ENCODE measurements at regions of chr20 and their contacts with region 1.

Region 1: GRCh38 chr20:47620808-47621805 is 119.4 kb downstream of the NCOA3 start:
- DNase-seq: no peak
- ATAC-seq: no peak
- H3K4me3 ChIP-seq: no peak overlapping the region
- H3K27ac ChIP-seq: no peak overlapping the region
- H3K4me1 ChIP-seq: no peaks in the 10 kb centered on the region
- H3K27me3 ChIP-seq: no peaks in the 10 kb centered on the region

Region 2: GRCh38 chr20:46757754-46758678 is 863.1 kb before region 1 on chr20:
- intact Hi-C with region 1: loop called in 1 of 4 experiments (anchors 10 kb)
- DNase-seq: peak; percentile 42 to 77 (median 73)
- ATAC-seq: peak in 1 of 2 donors; percentile 63
- H3K4me3 ChIP-seq: no peak overlapping the region
- H3K27ac ChIP-seq: no peak overlapping the region
- H3K4me1 ChIP-seq: no peaks in the 10 kb centered on the region
- H3K27me3 ChIP-seq: no peaks in the 10 kb centered on the region

Region 3: DNA sequence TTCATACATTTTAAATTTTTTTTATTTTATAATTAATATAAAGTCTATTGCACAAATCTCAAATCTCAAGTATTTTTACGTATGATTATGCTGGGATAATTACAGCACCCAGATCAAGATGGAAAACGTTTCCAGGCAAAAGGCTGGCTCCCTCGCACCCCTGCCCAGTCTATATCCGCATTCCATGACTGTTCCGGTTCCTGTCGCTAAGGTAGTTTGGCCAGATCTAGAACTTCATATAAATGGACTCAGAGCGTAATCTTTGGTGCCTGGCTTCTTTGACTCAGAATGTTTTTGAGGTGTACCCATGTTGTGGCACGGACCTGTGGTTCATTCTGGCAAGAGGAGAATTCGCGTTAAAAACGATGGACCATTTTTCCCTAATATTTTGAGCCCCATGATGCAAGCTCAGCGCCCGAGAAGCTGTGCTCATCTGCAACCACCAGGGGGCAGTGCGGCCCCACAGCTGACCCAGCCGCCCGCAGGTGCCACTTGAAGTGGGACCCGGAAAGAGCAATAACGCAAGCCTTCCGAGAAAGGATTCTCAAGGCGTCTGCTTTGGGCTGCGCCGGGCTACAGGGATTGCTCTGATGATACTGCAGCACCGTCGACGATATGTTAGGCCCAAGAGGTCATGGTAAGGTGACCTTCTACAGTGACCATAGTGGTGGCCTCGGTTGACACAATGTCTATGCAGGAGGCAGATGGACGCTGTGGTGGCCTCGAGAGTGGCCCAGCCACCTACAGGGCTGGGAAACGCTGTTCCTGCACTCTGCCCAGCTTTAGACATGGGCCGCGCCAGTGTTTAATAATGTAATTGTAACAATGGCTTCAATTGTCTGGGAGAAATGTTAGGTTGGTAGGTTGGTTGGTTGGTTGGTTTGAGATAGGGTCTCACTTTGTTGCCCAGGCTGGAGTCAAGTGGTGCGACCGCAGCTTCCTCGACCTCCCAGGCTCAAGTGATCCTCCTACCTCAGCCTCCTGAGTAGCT is 424.7 kb before region 1 on chr20:
- intact Hi-C with region 1: loop called in 3 of 4 experiments (anchors 5 to 10 kb)
- DNase-seq: peak; percentile 72 to 88 (median 86)
- ATAC-seq: peak; percentile 71 to 76
- H3K4me3 ChIP-seq: no peak overlapping the region
- H3K27ac ChIP-seq: no peak overlapping the region
- H3K4me1 ChIP-seq: peaks cover 3% of the 10 kb centered on the region
- H3K27me3 ChIP-seq: no peaks in the 10 kb centered on the region

Region 4: DNA sequence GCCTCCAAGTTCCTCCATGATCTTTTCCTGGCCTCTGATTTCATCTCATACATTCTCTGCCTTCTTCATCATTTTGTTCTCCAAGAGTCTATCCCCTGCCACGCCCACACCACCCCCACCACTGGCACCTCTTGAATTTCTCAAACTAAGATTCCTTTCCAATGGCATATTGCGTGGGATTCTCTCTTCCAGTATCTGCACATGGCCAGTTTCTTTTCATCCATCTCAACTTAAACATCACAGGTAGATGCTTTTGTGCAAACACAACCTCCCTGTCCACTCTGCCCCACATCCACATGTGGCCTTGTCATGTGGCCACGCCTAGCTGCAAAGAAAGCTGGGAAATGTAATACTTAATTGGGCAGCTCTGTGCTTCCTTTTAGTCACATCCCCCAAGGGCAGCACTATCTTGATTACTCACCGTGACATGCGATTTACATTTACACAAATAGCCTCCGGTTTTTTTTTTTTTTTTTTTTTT is 231.2 kb before region 1 on chr20:
- intact Hi-C with region 1: loop called in 3 of 4 experiments (anchors 10 kb)
- DNase-seq: no peak
- ATAC-seq: no peak
- H3K4me3 ChIP-seq: no peak overlapping the region
- H3K27ac ChIP-seq: no peak overlapping the region
- H3K4me1 ChIP-seq: no peaks in the 10 kb centered on the region
- H3K27me3 ChIP-seq: no peaks in the 10 kb centered on the region

Region 5: DNA sequence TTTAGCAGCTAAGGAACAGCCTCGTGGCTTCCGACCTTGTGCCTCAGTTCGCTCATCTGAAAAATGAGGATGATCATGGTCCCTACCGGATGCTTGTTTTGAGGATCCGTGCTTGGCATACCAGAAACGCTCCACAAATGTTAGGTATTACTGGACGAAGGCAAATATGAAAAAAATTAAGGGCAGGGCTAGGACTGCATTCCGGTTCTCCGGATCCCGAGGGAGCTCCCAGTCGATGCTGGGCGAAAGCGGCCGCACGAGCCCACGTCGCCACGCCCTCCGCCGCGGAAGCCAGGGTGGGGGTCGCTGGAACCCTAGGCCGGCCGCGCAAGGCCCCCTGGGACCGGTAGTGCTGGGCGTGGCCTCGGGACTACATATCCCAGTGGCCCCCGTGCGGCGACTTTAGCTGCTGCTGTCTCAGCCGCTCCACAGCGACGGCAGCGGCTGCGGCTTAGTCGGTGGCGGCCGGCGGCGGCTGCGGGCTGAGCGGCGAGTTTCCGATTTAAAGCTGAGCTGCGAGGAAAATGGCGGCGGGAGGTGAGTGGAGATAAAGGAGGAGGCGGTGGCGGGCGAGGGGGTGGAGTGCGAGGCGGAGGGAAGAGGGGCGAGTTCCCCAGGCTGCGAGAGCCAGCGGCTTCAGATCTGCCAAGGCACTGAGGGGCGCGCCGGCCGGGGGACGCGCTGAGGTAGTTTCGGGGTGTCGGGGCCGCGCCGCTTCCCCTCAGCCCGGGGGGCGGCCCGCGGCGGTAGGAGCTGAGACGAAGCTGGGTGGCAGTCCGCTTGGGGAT is 119.4 kb before region 1 on chr20 and contains the start of gene NCOA3:
- intact Hi-C with region 1: loop called in 2 of 4 experiments (anchors 10 kb)
- DNase-seq: peak; percentile 97 to 99 (median 98)
- ATAC-seq: peak; percentile 99
- H3K4me3 ChIP-seq: peak within 1 kb of the TSS; percentile 96
- H3K27ac ChIP-seq: peak within 1 kb of the TSS; percentile 91
- H3K4me1 ChIP-seq: peaks cover 3% of the 10 kb centered on the region
- H3K27me3 ChIP-seq: no peaks in the 10 kb centered on the region
- total RNA-seq, gene NCOA3: 21.0 to 27.2 (median 22.6) TPM

Region 6: GRCh38 chr20:48131581-48131980 is 510.5 kb after region 1 on chr20:
- intact Hi-C with region 1: no loop called
- DNase-seq: no peak
- ATAC-seq: no peak
- H3K4me3 ChIP-seq: no peak overlapping the region
- H3K27ac ChIP-seq: no peak overlapping the region
- H3K4me1 ChIP-seq: no peaks in the 10 kb centered on the region
- H3K27me3 ChIP-seq: no peaks in the 10 kb centered on the region

Measured in right cardiac atrium (tissue), 5 donors.